Heart right ventricle (tissue), 16 donors: ENCODE measurements at regions of chr1 and their contacts with region 1.

Region 1: DNA sequence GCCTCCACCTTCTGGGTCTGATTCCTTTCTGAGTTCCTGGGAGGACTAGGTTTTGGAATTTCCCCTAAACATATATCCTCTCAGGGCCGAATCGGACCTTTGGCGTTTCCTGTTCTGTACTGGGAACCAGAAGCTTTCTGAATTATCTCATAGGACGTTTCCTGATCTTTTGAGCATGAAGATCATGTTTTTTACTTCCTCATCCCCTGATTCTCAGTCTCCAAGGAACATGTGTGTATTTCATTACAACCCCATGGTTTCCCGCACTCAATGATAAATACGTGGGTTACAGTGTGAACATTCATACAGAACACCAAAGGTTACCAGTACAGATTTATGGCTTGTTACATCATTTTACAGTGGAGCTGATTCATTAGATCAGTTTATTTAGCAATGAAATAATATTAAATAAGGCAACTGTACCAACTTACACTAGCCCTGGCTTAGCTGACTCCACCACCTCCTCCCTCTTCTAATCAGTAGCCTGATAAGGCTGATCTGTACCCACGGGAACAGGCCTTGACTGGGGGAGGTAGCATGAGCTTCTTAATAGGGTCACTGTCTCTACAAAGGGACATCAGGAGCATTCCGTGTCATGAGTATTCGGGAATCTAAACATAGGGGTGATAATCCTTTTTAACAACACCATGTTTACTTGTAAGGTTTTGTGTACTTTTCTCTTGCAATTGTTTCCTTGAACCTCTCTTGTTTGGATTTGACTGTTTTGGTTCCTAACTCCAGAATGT is 57.8 kb upstream of the ERRFI1 start:
- DNase-seq: peak in 1 of 2 donors; percentile 19
- ATAC-seq: peak in 7 of 8 donors; percentile 41 to 74 (median 59)
- H3K4me3 ChIP-seq: no peak overlapping the region
- H3K27ac ChIP-seq: peak overlapping the region in 9 of 10 donors; percentile 9 to 86 (median 63)
- H3K4me1 ChIP-seq: peaks cover 0 to 34% (median 23%) of the 10 kb centered on the region in 9 donors
- H3K27me3 ChIP-seq: no peaks in the 10 kb centered on the region
- CTCF ChIP-seq: no peak

Region 2: DNA sequence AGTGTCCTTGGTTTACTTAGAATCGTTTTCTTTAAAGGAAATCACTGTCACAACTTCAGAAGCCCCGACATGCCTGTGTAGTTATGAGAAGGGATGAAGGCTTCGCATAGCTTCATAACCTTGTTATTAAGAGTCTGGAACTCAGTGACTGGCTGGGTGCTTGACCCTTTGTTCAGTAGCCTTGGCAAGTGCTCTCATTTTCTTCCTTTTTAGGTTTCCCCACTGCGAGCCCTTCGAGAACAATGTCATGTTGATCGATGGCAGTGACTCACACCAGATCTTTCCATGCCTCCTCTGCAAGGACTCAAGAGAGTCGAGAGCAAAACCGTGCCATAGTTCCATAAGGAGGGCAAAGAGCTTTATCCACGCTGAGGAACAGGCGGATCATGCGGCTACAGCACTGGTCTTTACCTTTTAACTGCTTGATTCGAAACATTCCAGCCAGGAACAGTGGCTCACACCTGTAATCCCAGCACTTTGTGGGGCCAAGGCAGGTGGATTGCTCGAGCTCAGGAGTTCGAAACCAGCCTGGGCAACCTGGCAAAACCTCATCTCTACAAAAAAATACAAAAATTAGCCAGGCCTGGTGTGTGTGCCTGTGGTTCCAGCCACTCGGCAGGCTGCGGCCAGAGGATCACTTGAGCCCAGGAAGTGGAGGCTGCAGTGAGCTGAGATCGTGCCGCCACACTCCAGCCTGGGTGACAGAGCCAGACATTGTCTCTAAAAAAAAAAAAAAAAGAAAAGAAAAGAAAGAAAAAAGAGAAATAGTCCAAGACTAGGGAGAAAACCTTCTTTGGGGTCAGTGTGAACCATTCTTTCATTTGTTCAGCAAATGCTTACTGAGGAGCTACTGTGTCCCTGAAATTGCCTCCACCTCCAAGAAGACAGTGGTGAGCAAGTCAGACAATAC is 37.6 kb after region 1 on chr1:
- intact Hi-C with region 1: loop called in 1 of 10 experiments (anchors 5 kb)
- DNase-seq: peak in 1 of 2 donors; percentile 21
- ATAC-seq: peak in 6 of 8 donors; percentile 39 to 80 (median 50)
- H3K4me3 ChIP-seq: peak overlapping the region in 1 of 10 donors; percentile 18
- H3K27ac ChIP-seq: peak overlapping the region; percentile 0 to 81 (median 56)
- H3K4me1 ChIP-seq: peaks cover 0 to 49% (median 36%) of the 10 kb centered on the region in 9 donors
- H3K27me3 ChIP-seq: no peaks in the 10 kb centered on the region
- CTCF ChIP-seq: no peak